Left colon (tissue), 2 donors: ENCODE measurements at regions of chr2 and their contacts with region 1.

Region 1: GRCh38 chr2:96801005-96801785 is 14.9 kb upstream of the CNNM3 start:
- DNase-seq: peak; percentile 79 to 85
- ATAC-seq: peak; percentile 93

Region 2: GRCh38 chr2:96638144-96639121 is 162.8 kb before region 1 on chr2 and contains the start of gene KANSL3:
- intact Hi-C with region 1: loop called in 1 of 2 experiments (anchors 5 kb)
- DNase-seq: peak; percentile 85 to 91
- ATAC-seq: peak; percentile 87
- total RNA-seq, gene KANSL3: 39.3 to 40.7 TPM

Region 3: GRCh38 chr2:96869281-96869821 is 68.2 kb after region 1 on chr2:
- intact Hi-C with region 1: no loop called
- DNase-seq: peak; percentile 61 to 75
- ATAC-seq: peak; percentile 27